MCF 10A (cell line): ENCODE measurements at regions of chr1 and their contacts with region 1.

Region 1: DNA sequence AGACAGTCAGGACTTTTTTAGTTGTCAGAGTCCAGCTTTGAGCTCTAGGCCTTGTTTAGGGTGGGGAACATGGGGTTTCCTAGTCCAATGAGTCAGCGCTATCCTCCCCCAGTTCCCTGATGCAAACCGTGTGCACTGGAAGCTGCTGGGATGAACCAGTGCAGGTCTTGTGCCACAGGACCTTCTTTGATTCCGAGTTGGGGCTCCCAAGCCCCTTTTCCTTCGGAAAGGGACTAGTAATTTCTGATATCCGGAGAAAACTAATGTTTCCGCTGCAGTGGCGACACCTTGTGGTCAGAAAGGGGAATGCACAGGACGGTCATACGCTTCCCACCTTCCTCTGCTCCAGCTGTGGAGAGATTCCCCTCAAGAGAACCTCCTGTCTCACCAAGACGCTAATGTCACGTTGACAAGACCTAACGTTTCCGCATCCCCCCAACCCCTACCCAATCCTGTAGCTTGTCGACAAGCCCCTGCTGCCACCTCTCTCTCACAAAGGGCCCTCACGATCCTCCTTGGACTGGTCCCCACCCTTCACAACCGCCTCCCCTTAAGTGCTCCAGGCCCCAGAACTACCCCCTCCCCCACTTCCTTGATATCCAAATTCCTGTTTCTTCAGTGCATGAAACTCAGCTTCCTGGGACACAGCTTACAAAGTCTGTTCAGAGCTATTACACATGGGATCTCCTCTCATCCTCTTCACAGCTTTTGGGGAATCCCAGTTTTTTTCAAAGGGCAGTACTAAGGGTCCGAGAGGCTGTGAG is 30.9 kb downstream of the GPA33 start:
- DNase-seq: peak; percentile 79
- H3K4me3 Mint-ChIP-seq: no peak overlapping the region
- H3K27ac Mint-ChIP-seq: no peak overlapping the region
- H3K4me1 Mint-ChIP-seq: peaks cover 5% of the 10 kb centered on the region
- H3K27me3 Mint-ChIP-seq: no peaks in the 10 kb centered on the region
- CTCF ChIP-seq: peak; percentile 99

Region 2: GRCh38 chr1:165928075-165928731 is 1131.0 kb before region 1 on chr1:
- CTCF ChIA-PET with region 1: interaction called, 16 read pairs
- POLR2A ChIA-PET with region 1: no interaction called
- intact Hi-C with region 1: loop called (anchors 5 kb)
- DNase-seq: peak; percentile 82
- H3K4me3 Mint-ChIP-seq: no peak overlapping the region
- H3K27ac Mint-ChIP-seq: no peak overlapping the region
- H3K4me1 Mint-ChIP-seq: no peaks in the 10 kb centered on the region
- H3K27me3 Mint-ChIP-seq: no peaks in the 10 kb centered on the region
- CTCF ChIP-seq: peak; percentile 78

Region 3: DNA sequence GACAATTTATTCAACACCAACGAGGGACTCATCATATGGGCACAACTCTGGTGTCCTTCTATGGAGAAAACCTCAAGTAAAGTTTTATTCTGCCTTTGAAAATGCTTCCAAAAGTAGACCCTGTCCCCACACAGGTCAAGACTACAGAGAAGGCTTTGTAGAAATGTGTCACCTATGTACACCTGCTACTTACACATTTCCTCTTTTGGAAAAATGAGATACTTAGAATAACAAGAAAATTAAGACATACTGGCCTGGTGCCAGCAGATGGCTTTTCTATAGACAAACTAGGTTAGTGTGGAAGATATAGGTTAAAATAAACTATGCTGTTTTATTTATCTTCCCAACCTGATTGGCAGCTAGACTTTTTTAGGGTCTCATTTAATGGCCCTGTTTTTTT is 206.3 kb before region 1 on chr1:
- CTCF ChIA-PET with region 1: interaction called, 24 read pairs
- POLR2A ChIA-PET with region 1: interaction called, 3 read pairs
- intact Hi-C with region 1: no loop called
- DNase-seq: no peak
- H3K4me3 Mint-ChIP-seq: no peak overlapping the region
- H3K27ac Mint-ChIP-seq: no peak overlapping the region
- H3K4me1 Mint-ChIP-seq: peaks cover 6% of the 10 kb centered on the region
- H3K27me3 Mint-ChIP-seq: no peaks in the 10 kb centered on the region
- CTCF ChIP-seq: no peak

Region 4: GRCh38 chr1:166910396-166910994 is 148.7 kb before region 1 on chr1:
- CTCF ChIA-PET with region 1: interaction called, 1,662 read pairs
- POLR2A ChIA-PET with region 1: interaction called, 93 read pairs
- intact Hi-C with region 1: loop called (anchors 1 kb)
- DNase-seq: peak; percentile 98
- H3K4me3 Mint-ChIP-seq: no peak overlapping the region
- H3K27ac Mint-ChIP-seq: no peak overlapping the region
- H3K4me1 Mint-ChIP-seq: no peaks in the 10 kb centered on the region
- H3K27me3 Mint-ChIP-seq: no peaks in the 10 kb centered on the region
- CTCF ChIP-seq: peak; percentile 91

Region 5: DNA sequence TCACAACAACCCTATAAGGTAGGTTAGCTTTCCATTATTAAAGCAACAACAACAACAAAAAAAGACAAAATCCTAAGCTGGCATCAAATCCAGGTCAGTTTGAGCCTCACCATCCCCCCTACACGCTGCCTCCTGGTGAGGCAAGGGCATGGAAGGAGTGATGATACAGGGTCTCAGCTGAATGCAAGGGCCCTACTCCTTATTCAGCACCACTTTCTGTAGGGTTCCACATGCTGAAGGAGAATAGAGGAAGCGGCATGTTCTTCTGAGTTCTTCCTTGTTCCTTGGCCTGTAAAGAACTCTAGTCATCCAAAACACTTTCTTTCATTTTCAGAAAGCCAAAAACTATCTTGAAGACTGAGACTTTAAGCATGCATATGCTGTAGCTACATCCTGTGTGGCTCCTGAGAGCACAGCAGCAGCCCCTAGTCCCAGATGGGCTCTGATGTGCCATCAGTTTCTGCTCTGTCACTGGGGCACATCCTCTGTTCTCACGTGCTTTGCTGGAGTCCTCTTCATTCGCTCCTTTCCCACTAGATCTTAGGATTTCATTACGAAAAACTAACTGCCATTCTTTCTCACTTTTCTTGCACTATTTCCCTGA is 90.1 kb before region 1 on chr1:
- CTCF ChIA-PET with region 1: interaction called, 76 read pairs
- POLR2A ChIA-PET with region 1: interaction called, 3 read pairs
- intact Hi-C with region 1: no loop called
- DNase-seq: no peak
- H3K4me3 Mint-ChIP-seq: no peak overlapping the region
- H3K27ac Mint-ChIP-seq: no peak overlapping the region
- H3K4me1 Mint-ChIP-seq: peaks cover 8% of the 10 kb centered on the region
- H3K27me3 Mint-ChIP-seq: peaks cover 83% of the 10 kb centered on the region
- CTCF ChIP-seq: no peak

Region 6: GRCh38 chr1:167043752-167044488 is 15.3 kb before region 1 on chr1:
- CTCF ChIA-PET with region 1: interaction called, 186 read pairs
- POLR2A ChIA-PET with region 1: no interaction called
- intact Hi-C with region 1: no loop called
- DNase-seq: peak; percentile 83
- H3K4me3 Mint-ChIP-seq: peak overlapping the region; percentile 78
- H3K27ac Mint-ChIP-seq: peak overlapping the region; percentile 32
- H3K4me1 Mint-ChIP-seq: peaks cover 14% of the 10 kb centered on the region
- H3K27me3 Mint-ChIP-seq: no peaks in the 10 kb centered on the region
- CTCF ChIP-seq: no peak

Region 7: DNA sequence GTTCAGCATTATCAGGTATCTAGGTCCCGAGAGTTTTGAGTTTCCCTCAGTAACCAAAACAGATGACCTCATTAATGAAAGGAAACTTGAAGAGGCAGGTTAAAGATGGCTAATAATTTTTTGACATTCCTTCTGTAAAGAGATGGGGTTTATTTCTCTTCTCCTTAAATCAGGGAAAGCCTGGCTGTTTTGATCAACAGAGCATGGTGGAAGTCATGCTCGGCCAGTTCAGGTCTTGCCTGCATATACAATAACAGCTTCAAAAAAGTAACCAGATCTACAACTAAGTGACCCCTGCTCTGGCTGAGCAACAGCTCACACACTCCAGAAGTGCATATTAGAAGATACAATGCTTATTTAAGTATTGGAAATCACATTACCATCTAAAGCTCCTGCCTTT is 124.9 kb after region 1 on chr1:
- CTCF ChIA-PET with region 1: interaction called, 13 read pairs
- POLR2A ChIA-PET with region 1: interaction called, 3 read pairs
- intact Hi-C with region 1: no loop called
- DNase-seq: no peak
- H3K4me3 Mint-ChIP-seq: no peak overlapping the region
- H3K27ac Mint-ChIP-seq: no peak overlapping the region
- H3K4me1 Mint-ChIP-seq: no peaks in the 10 kb centered on the region
- H3K27me3 Mint-ChIP-seq: no peaks in the 10 kb centered on the region
- CTCF ChIP-seq: no peak

Region 8: DNA sequence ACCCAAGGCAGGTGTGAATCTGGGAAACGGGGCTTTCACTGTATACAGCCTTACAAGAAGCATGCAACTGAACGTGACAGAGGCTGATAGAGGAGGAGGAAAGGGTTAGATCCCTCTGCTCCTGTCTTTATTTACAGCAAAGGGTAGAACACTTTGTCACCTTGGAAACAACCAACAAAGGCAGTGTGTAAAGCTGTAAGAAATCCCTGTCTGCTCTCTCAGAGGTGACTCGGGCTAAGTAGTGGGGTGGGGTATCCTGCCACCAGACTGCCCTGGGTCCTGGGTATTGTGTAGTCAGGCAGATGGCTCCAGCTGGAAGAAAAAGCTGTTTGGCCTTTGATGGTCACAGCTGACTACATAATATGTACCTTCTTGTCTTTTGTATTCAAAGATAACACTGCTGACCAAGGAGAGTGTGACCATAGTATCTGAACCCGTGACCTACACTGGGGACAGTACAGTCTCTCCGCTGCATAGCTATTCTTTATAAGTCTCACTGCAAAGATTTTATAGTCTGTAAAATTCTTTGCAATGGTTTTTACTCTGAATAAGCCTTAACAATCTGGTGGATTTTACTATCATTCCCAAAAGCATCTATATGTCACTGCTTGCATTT is 139.4 kb after region 1 on chr1:
- CTCF ChIA-PET with region 1: no interaction called
- POLR2A ChIA-PET with region 1: no interaction called
- intact Hi-C with region 1: no loop called
- DNase-seq: no peak
- H3K4me3 Mint-ChIP-seq: no peak overlapping the region
- H3K27ac Mint-ChIP-seq: no peak overlapping the region
- H3K4me1 Mint-ChIP-seq: peaks cover 15% of the 10 kb centered on the region
- H3K27me3 Mint-ChIP-seq: no peaks in the 10 kb centered on the region
- CTCF ChIP-seq: no peak